ENCODE measurements at regions of chr1 and their contacts with region 1.

Region 1: GRCh38 chr1:169475806-169476387 is 9.8 kb downstream of the SLC19A2 start:
- DNase-seq: no peak
- ATAC-seq: no peak
- H3K4me3 ChIP-seq: no peak overlapping the region
- H3K4me3 Mint-ChIP-seq: no peak overlapping the region
- H3K27ac ChIP-seq: no peak overlapping the region
- H3K27ac Mint-ChIP-seq: no peak overlapping the region
- H3K4me1 ChIP-seq: no peaks in the 10 kb centered on the region
- H3K4me1 Mint-ChIP-seq: no peaks in the 10 kb centered on the region
- H3K27me3 ChIP-seq: no peaks in the 10 kb centered on the region
- H3K27me3 Mint-ChIP-seq: no peaks in the 10 kb centered on the region
- CTCF ChIP-seq: no peak

Region 2: DNA sequence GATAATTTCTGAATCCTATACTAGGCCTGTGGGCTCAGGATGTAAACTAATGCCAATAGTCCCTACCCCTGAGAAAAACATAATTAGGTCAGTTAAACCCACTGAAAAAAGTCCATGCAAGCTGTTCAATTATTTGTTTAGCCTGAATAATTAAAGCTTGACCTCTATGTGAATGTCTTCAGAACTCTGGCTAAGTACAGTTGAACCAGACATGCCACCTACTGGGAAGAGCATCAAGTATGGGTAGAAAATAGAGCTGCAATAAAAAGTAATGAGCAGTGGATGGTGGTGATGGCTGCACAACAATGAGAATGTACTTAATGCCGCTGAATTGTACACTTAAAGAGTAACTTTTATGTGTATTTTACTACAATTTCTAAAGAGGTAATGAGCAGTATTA is 33.5 kb after region 1 on chr1:
- CTCF ChIA-PET with region 1: no interaction called
- POLR2A ChIA-PET with region 1: no interaction called
- intact Hi-C with region 1: loop called in 1 of 2 experiments (anchors 1 kb)
- DNase-seq: no peak
- ATAC-seq: no peak
- H3K4me3 ChIP-seq: no peak overlapping the region
- H3K4me3 Mint-ChIP-seq: no peak overlapping the region
- H3K27ac ChIP-seq: no peak overlapping the region
- H3K27ac Mint-ChIP-seq: no peak overlapping the region
- H3K4me1 ChIP-seq: peaks cover 3% of the 10 kb centered on the region
- H3K4me1 Mint-ChIP-seq: peaks cover 35% of the 10 kb centered on the region
- H3K27me3 ChIP-seq: no peaks in the 10 kb centered on the region
- H3K27me3 Mint-ChIP-seq: no peaks in the 10 kb centered on the region
- CTCF ChIP-seq: no peak

Region 3: DNA sequence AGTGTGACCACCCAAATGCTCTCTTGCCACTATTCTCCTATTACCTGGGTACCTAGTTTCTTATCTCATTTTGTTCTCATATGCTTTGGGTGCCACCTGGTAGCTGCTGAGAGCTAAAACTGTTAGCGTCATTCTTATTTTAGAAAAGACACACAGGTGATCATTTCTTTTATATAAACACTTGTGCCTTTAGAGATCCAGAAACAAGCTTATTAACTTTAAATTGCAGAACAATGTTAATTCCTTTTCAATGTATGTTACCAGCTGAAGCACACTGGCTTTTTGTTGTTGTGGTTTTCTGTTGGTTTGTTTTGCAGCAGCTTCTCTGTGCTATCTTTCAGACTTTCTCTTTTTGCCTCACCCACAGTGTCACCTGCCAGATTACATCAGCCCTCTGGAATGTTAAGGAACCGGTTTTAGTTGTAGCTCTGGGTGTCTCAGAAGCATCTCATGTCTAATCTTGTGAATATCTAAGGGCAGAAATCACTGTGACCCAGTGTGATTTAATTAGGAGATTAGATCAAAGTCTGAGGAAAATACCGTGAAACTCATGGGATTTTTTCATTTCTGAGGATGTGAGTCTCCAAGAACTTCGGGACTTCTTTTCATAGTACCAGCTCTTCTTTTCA is 53.3 kb after region 1 on chr1:
- CTCF ChIA-PET with region 1: no interaction called
- POLR2A ChIA-PET with region 1: no interaction called
- intact Hi-C with region 1: loop called in 1 of 2 experiments (anchors 5 kb)
- DNase-seq: no peak
- ATAC-seq: no peak
- H3K4me3 ChIP-seq: no peak overlapping the region
- H3K4me3 Mint-ChIP-seq: peak overlapping the region; percentile 6
- H3K27ac ChIP-seq: no peak overlapping the region
- H3K27ac Mint-ChIP-seq: no peak overlapping the region
- H3K4me1 ChIP-seq: no peaks in the 10 kb centered on the region
- H3K4me1 Mint-ChIP-seq: peaks cover 10% of the 10 kb centered on the region
- H3K27me3 ChIP-seq: no peaks in the 10 kb centered on the region
- H3K27me3 Mint-ChIP-seq: no peaks in the 10 kb centered on the region
- CTCF ChIP-seq: no peak